AG04450 (cell line): ENCODE measurements at regions of chr6 and their contacts with region 1.

Region 1: DNA sequence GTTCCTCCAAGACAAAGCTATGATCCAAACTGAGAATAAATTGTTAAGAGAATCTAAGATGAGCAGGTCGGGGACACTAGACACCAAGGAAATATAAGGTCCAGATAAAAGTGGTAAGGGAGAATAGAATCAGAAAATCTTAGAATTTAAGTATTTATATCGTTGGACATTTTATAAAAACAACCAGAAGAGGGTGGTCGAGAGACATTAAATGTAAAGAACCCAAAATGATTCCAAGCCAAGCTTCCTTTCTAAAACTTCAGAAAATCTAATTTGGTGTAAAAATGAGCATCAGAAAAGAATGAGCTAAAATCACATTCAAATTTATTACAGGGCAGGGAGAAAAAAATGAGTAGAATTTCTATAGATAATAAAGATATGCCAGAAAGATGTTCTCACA is 97.8 kb upstream of the OGFRL1 start:
- DNase-seq: no peak
- H3K4me3 ChIP-seq: no peak overlapping the region
- H3K27ac ChIP-seq: no peak overlapping the region
- H3K27me3 ChIP-seq: no peaks in the 10 kb centered on the region
- CTCF ChIP-seq: peak; percentile 34; the same call in 1 of the 2 replicates

Region 2: DNA sequence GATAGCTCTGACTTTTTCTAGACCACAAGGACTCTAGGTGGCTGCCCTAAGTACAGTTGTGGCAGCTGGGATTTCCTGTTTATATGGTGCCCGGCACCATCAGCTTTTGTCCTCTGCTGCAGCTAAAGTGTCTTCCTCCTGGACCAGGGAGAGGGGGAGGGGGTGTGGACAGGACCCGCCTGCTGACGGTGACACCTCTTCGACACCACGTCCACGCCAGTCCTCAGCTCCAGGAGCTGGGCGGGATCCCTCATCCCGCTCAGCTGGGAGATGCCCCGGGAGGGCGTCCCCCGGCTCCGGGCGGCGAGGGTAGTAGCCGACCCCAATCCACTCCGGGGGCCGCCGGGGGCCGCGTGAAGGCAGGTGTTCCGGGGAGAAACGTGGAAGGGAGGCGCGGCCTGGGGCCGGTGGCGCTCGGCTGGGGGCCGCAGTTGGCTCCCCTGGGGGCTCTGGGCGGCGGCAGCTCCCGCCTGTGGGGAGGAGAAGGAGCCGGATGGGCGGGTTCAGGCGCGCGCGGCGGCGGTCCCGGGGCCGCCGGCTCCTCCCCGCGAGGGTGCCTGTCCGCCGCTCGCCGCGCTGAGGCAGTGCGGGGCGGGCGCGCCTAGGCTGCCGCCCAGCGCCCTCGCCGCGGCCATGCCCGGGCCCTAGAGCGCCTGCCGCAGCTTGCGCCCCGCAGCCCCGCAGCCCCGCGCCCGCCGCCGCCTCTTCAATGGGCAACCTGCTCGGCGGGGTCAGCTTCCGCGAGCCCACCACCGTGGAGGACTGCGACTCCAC is 97.6 kb after region 1 on chr6 and contains the start of gene OGFRL1:
- CTCF ChIA-PET with region 1: interaction called, 30 read pairs
- POLR2A ChIA-PET with region 1: interaction called, 3 read pairs
- DNase-seq: no peak
- H3K4me3 ChIP-seq: peak within 1 kb of the TSS; percentile 73
- H3K27ac ChIP-seq: no peak within 1 kb of the TSS
- H3K27me3 ChIP-seq: no peaks in the 10 kb centered on the region
- CTCF ChIP-seq: no peak
- polyA plus RNA-seq, gene OGFRL1: 12.8 and 16.6 TPM in 2 replicates

Region 3: DNA sequence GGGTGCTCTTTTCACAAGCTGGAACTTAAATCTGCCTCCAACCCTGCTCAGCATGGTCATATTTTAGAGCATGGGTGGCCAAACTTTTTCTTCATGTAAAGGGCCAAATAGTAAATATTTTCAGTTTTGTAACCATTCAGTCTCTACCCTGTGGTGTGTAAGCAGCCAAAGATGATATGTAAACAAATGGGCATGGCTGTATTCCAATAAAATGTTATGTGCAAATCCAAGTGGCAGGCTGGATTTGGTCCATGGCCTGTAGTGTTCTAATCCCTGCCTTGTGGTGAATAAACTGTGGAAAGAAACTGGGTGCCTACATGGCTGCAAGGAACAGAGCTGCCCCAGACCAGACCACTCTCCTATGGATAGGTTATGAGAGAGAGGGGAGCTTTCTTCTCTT is 130.5 kb after region 1 on chr6:
- CTCF ChIA-PET with region 1: interaction called, 11 read pairs
- POLR2A ChIA-PET with region 1: no interaction called
- DNase-seq: no peak
- H3K4me3 ChIP-seq: no peak overlapping the region
- H3K27ac ChIP-seq: no peak overlapping the region
- H3K27me3 ChIP-seq: no peaks in the 10 kb centered on the region
- CTCF ChIP-seq: no peak

Region 4: GRCh38 chr6:71349395-71349794 is 158.6 kb after region 1 on chr6:
- CTCF ChIA-PET with region 1: interaction called, 77 read pairs
- POLR2A ChIA-PET with region 1: no interaction called
- DNase-seq: no peak
- H3K4me3 ChIP-seq: no peak overlapping the region
- H3K27ac ChIP-seq: no peak overlapping the region
- H3K27me3 ChIP-seq: no peaks in the 10 kb centered on the region
- CTCF ChIP-seq: peak; percentile 65

Region 5: DNA sequence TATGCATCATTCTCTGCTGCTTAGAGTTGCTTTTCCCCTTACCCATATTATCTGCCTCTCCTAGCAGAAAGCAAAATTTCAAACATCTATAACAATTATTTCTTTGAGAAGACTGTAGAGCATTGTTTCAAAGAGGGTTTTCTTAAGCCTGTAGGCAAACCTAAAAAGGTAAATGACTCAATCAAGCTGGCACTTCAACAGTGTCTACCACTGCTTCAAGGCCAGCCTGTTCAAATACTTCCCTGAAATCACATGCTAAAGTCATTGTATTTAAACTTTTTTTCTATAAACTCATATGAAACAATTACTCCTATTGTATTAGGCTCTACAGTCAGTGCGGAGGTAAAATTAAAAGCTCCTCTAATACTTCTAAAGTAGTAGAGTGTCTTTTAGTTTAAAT is 184.9 kb after region 1 on chr6:
- CTCF ChIA-PET with region 1: interaction called, 24 read pairs
- POLR2A ChIA-PET with region 1: no interaction called
- DNase-seq: no peak
- H3K4me3 ChIP-seq: no peak overlapping the region
- H3K27ac ChIP-seq: no peak overlapping the region
- H3K27me3 ChIP-seq: no peaks in the 10 kb centered on the region
- CTCF ChIP-seq: no peak

Region 6: DNA sequence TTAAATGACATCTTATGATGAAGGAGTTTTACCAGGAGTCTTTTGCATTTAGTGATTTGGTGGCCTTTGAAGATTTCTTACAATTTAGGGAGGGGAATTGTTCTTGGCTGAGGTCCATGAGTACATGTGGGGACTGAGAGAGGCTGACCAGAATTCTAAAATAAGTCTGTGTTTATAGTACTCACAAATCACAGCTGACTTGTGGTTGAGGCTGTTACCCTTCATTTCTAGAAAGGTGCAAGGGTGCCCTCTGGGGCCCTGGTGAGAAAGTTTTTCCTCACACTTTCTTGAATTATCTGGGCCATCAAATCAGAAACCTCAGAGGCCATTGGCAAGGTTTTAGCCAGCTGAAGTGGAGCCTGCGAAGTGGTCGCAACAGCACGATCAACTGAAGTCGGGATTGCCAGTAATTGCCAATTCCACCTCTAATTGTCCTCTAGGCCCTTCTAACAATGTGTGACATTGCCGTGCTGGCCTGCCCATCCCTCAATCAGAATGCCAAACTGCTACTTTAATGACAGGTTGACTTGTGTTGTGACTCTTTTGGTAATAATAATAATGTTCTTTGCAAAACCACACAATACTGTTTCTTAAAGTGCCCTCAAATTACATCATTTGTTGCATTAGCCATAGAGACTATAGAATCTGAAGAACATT is 319.4 kb after region 1 on chr6:
- CTCF ChIA-PET with region 1: interaction called, 26 read pairs
- POLR2A ChIA-PET with region 1: no interaction called
- DNase-seq: peak; percentile 55
- H3K4me3 ChIP-seq: no peak overlapping the region
- H3K27ac ChIP-seq: no peak overlapping the region
- H3K27me3 ChIP-seq: no peaks in the 10 kb centered on the region
- CTCF ChIP-seq: peak; percentile 79